A549 (cell line): ENCODE measurements at regions of chr7 and their contacts with region 1.

Region 1: DNA sequence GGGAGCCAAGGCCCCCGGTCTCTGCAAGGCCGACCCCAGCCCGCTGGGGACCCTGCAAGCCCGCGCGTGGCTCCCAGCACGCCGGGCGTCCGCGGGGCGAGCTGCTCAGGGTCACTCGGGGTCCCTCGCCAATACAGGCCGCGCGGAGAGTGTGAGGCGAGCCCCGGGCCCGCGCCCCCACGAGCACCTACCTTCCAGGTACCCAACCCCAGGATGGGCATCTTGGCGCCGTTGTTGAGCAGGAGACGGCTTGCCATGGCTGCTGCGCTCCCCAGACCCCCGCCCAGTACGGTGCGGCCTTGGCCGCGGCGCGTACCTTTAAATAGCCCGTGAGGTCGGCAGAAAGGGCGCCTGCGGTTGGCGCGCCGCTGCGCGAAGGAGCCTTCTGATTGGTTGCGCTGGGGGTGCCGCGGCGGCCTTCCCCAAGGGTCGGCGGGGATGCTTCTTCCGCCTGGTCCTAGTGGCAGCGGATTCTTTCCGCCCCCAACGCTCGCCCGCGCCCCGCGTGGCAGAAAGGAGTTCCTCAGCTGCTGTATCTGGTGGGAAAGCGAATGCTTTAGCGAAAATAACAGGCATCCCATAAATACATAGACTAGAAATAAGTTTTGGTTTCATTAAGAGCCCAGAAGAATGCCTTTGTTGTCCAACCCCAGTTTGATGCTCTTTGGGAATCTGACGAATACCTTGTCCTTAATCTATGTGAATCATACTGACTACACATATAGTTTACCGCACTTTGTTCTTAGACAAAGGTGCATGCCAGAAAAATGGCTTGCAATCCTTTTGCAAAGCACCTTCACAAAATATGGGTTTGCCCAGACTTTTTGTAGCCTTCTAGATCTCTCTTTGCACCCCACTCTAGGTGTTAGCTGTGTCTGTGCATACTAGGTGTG is at the start of gene AKR1B1:
- DNase-seq: peak; percentile 98 to 99
- ATAC-seq: peak; percentile 93 to 94
- H3K4me3 ChIP-seq: peak within 1 kb of the TSS; percentile 86
- H3K27ac ChIP-seq: peak within 1 kb of the TSS; percentile 93 to 94
- H3K4me1 ChIP-seq: peaks cover 72% of the 10 kb centered on the region
- CTCF ChIP-seq: peak; percentile 56
- EP300 ChIP-seq: no peak
- POLR2A ChIP-seq: peak; percentile 99
- RAD21 ChIP-seq: peak; percentile 10 to 56; a peak in 3 of 5 replicates
- polyA plus RNA-seq, gene AKR1B1: 1,636 and 1,761 TPM in 2 replicates

Region 2: DNA sequence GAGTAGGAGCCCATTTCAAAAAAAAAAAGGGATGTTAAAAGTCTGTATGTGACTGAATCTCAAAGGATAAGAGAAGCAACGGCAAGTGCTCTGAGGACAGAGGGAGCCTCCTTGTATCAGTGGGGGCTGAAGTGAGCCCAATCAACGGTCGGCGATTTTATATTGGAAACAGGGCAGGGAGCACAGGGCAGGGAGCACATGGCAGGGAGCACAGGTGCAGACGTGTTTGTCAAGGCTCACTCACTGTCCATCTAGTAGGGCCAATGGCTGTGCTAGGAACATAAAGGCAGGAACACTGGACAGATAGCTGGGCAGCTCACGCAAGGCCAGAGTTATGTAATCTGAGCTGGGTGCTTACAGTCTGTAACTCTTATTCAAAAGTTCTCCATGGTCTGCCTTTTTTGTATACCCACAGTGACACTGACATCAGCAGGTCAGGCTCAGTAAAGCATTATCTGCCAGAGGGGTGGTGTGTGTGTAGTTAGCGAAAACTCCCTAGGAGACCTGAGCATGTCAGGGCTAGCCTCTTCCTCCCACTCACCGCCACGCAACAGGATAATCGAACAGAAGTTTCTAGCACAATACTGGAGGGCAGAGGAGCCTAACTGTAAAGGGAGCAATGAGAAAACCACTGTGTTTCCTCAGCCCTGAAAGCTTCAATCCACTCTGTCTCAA is 15.5 kb before region 1 on chr7:
- CTCF ChIA-PET with region 1: interaction called, 116 read pairs
- POLR2A ChIA-PET with region 1: interaction called, 27 read pairs
- DNase-seq: no peak
- ATAC-seq: no peak
- H3K4me3 ChIP-seq: no peak overlapping the region
- H3K27ac ChIP-seq: peak overlapping the region; percentile 5 to 94; a peak in 4 of 6 replicates
- H3K4me1 ChIP-seq: peaks cover 44% of the 10 kb centered on the region
- CTCF ChIP-seq: no peak
- EP300 ChIP-seq: no peak
- POLR2A ChIP-seq: no peak
- RAD21 ChIP-seq: no peak

Region 3: GRCh38 chr7:134448700-134449229 is 10.3 kb before region 1 on chr7:
- CTCF ChIA-PET with region 1: interaction called, 116 read pairs
- POLR2A ChIA-PET with region 1: interaction called, 27 read pairs
- DNase-seq: peak; percentile 94 to 97
- ATAC-seq: peak; percentile 58 to 71
- H3K4me3 ChIP-seq: no peak overlapping the region
- H3K27ac ChIP-seq: peak overlapping the region; percentile 94 to 95
- H3K4me1 ChIP-seq: peaks cover 97% of the 10 kb centered on the region
- CTCF ChIP-seq: no peak
- EP300 ChIP-seq: peak in 1 of 2 experiments; percentile 42; a peak in 1 of 5 replicates
- POLR2A ChIP-seq: no peak
- RAD21 ChIP-seq: no peak; a peak in 1 of 5 replicates

Region 4: DNA sequence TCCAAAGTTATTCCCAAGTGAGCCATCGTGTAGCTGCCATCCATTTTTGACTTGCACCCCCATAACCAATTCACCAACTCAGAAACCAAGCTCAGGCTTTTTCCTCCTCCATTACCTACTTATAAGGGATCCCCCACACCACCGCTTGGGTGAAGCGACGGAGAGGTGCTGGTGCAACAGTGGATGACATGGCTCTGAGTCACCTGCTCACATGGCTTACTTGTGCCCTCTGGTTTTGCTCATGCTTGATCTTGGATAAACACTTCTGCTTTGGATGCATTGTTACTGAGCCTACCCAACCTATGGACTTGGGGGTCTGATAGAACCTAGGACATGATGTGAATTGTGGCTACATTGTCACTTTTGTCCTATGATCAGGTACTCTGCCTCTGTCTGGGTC is 11.8 kb after region 1 on chr7:
- CTCF ChIA-PET with region 1: interaction called, 28 read pairs
- POLR2A ChIA-PET with region 1: interaction called, 4 read pairs
- DNase-seq: peak; percentile 70 to 74
- ATAC-seq: peak; percentile 45 to 66; a peak in 3 of 6 replicates
- H3K4me3 ChIP-seq: no peak overlapping the region
- H3K27ac ChIP-seq: peak overlapping the region; percentile 12 to 55; a peak in 5 of 6 replicates
- H3K4me1 ChIP-seq: peaks cover 41% of the 10 kb centered on the region
- CTCF ChIP-seq: no peak
- EP300 ChIP-seq: no peak
- POLR2A ChIP-seq: no peak
- RAD21 ChIP-seq: no peak

Region 5: GRCh38 chr7:134480736-134481135 is 21.7 kb after region 1 on chr7:
- CTCF ChIA-PET with region 1: interaction called, 84 read pairs
- POLR2A ChIA-PET with region 1: interaction called, 24 read pairs
- DNase-seq: peak; percentile 59 to 82
- ATAC-seq: peak; percentile 83 to 86
- H3K4me3 ChIP-seq: no peak overlapping the region
- H3K27ac ChIP-seq: peak overlapping the region; percentile 62 to 67
- H3K4me1 ChIP-seq: peaks cover 60% of the 10 kb centered on the region
- CTCF ChIP-seq: no peak
- EP300 ChIP-seq: no peak
- POLR2A ChIP-seq: no peak
- RAD21 ChIP-seq: peak; percentile 13 to 18; a peak in 1 of 5 replicates

Region 6: GRCh38 chr7:134520130-134520529 is 61.1 kb after region 1 on chr7:
- CTCF ChIA-PET with region 1: interaction called, 486 read pairs
- POLR2A ChIA-PET with region 1: no interaction called
- DNase-seq: peak in 1 of 2 experiments; percentile 67
- ATAC-seq: peak; percentile 59 to 67; a peak in 5 of 6 replicates
- H3K4me3 ChIP-seq: peak overlapping the region; percentile 32
- H3K27ac ChIP-seq: peak overlapping the region; percentile 76 to 81
- H3K4me1 ChIP-seq: peaks cover 65% of the 10 kb centered on the region
- CTCF ChIP-seq: peak; percentile 76
- EP300 ChIP-seq: no peak
- POLR2A ChIP-seq: no peak
- RAD21 ChIP-seq: peak; percentile 70 to 78; a peak in 4 of 5 replicates